ENCODE measurements at regions of chr5 and their contacts with region 1.

Region 1: DNA sequence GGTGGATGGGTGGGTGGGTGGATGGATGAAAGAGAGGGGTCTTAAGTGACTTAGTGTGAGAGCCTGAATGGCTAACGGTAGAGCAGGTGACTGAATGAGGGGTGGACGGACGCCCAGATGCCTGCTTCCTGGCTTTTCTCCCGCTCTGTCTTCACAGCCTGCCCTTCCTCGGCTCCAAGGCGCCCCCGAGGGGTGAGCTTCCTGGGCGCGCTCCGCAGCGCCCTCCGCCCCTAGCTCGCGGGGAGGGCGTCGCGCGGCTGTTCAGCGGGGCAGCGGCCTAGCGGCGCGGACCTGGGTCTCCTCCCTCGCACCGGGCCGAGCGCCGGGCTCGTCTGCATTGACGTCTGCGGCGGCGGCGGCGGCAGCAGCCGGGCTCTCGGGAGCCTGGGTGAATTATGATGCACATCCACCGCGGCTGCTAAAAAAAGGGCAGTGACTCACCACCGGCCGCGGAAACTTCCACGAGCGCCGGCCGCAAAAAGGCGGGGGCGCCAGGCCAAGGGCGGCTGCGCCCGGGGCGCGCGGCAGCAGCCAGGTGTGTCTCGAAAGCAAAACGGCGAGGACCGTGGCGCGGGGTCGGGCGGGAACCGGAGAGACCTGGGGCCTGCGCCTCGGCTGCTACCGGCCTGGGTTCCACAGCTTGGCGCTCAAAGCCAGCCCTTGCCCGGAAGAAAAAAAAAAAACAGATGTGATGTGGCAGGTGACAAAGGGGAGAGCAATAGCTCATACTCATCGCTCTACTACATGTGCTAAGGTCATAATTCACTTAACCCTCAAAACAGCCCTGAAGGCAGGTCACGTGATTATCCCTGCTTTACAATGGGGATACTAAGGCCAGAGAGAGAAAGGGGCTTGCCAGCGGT is 143.0 kb upstream of the ADRA1B start:
- DNase-seq: peak; percentile 92 to 96
- ATAC-seq: peak; percentile 95
- H3K4me3 ChIP-seq: no peak overlapping the region
- H3K27ac ChIP-seq: peak overlapping the region; percentile 59 to 83
- H3K4me1 ChIP-seq: peaks cover 5 to 6% of the 10 kb centered on the region in 2 donors
- H3K27me3 ChIP-seq: no peaks in the 10 kb centered on the region

Region 2: DNA sequence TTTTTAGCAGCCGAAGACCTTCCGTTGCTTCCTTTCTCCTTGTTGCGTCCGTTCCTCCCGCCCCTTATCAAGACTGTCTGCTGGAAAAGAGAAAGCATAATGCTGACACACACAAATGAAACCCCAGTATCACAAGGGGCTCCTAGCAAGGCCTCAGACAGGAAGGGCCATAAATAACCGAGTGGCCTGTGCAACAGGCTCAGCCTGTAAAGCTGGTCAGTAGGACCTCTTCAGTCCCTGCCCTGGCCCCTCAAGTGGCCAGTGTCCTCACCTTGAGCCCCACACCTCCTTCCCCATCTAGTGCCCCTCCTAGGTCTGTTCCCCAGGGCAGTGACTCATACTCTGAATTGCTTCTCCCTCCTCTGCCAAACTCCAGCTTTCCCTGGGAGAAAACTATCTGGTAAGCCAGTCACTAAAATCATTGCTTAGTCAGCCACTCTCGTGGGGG is 268.4 kb before region 1 on chr5:
- intact Hi-C with region 1: loop called (anchors 5 to 10 kb)
- DNase-seq: no peak
- ATAC-seq: peak; percentile 84
- H3K4me3 ChIP-seq: no peak overlapping the region
- H3K27ac ChIP-seq: peak overlapping the region; percentile 0 to 90
- H3K4me1 ChIP-seq: peaks cover 2 to 7% of the 10 kb centered on the region in 2 donors
- H3K27me3 ChIP-seq: no peaks in the 10 kb centered on the region

Region 3: GRCh38 chr5:159605585-159605984 is 167.7 kb before region 1 on chr5:
- intact Hi-C with region 1: loop called in 1 of 2 experiments (anchors 10 kb)
- DNase-seq: no peak
- ATAC-seq: no peak
- H3K4me3 ChIP-seq: no peak overlapping the region
- H3K27ac ChIP-seq: peak overlapping the region in 1 of 2 donors; percentile 40
- H3K4me1 ChIP-seq: peaks cover 0 to 3% of the 10 kb centered on the region in 2 donors
- H3K27me3 ChIP-seq: no peaks in the 10 kb centered on the region

Region 4: DNA sequence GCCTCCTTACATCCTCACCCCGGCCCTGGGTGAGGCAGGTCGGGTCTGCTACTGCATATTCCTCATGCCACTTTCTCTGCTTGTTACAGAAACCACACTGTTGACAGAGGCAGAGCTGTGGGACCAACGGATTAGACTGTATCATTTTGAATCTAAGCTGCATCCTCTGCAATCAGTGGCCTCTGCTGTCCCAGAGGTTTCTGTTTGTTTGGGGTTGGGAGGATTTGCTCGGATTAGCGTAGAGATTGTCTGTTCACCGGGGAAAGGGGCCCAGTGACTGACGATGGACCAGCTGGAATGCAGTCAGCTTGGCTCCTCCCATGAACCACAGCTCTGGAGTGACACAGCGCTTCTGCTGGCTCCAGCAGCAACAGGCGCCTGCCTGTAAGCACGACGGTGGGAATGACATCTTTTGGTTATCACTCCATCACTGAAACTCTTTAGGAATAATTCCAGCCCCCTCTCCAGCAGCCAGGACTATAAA is 105.7 kb after region 1 on chr5:
- intact Hi-C with region 1: no loop called
- DNase-seq: peak; percentile 80 to 87
- ATAC-seq: peak; percentile 62
- H3K4me3 ChIP-seq: no peak overlapping the region
- H3K27ac ChIP-seq: peak overlapping the region in 1 of 2 donors; percentile 95
- H3K4me1 ChIP-seq: peaks cover 0 to 8% of the 10 kb centered on the region in 2 donors
- H3K27me3 ChIP-seq: no peaks in the 10 kb centered on the region

Region 5: GRCh38 chr5:159902444-159903121 is 129.3 kb after region 1 on chr5:
- intact Hi-C with region 1: no loop called
- DNase-seq: no peak
- ATAC-seq: no peak
- H3K4me3 ChIP-seq: no peak overlapping the region
- H3K27ac ChIP-seq: no peak overlapping the region
- H3K4me1 ChIP-seq: peaks cover 2 to 4% of the 10 kb centered on the region in 2 donors
- H3K27me3 ChIP-seq: no peaks in the 10 kb centered on the region

Measured in aorta (tissue), 5 donors.